ENCODE measurements at regions of chr9 and their contacts with region 1.

Region 1: GRCh38 chr9:83334320-83334719 is 203.9 kb downstream of the FRMD3 start:
- DNase-seq: peak; percentile 67 to 80
- H3K4me3 ChIP-seq: no peak overlapping the region
- H3K27ac ChIP-seq: no peak overlapping the region; the same call in 1 of the 2 replicates
- H3K4me1 ChIP-seq: peaks cover 13% of the 10 kb centered on the region; the same call in 1 of the 2 replicates
- H3K27me3 ChIP-seq: no peaks in the 10 kb centered on the region
- CTCF ChIP-seq: peak; percentile 93

Region 2: DNA sequence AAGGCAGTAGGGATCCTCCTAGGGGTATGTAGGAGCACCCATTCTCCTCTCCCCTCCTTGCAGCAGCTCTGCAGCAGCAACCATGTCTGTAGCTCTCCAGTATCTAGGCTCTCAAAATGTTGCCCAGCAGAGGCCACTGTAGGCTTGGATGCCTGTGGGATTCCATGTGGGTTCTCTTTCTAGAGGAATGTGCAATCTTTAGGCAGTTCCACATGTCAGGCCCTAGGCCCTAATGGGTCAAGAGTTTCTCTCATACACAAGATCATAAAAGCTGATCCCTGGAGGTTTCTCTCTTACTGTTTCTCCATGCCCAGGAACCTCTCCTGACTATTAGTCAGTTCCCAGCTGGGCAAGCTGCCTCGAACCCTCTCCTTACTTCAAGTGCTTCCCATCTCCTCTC is 11.9 kb before region 1 on chr9:
- CTCF ChIA-PET with region 1: no interaction called
- POLR2A ChIA-PET with region 1: no interaction called
- intact Hi-C with region 1: no loop called
- DNase-seq: no peak
- H3K4me3 ChIP-seq: no peak overlapping the region
- H3K27ac ChIP-seq: no peak overlapping the region
- H3K4me1 ChIP-seq: no peaks in the 10 kb centered on the region
- H3K27me3 ChIP-seq: no peaks in the 10 kb centered on the region
- CTCF ChIP-seq: no peak

Region 3: GRCh38 chr9:83346655-83347420 is 12.5 kb after region 1 on chr9:
- CTCF ChIA-PET with region 1: no interaction called
- POLR2A ChIA-PET with region 1: no interaction called
- intact Hi-C with region 1: no loop called
- DNase-seq: no peak
- H3K4me3 ChIP-seq: no peak overlapping the region
- H3K27ac ChIP-seq: no peak overlapping the region
- H3K4me1 ChIP-seq: no peaks in the 10 kb centered on the region
- H3K27me3 ChIP-seq: no peaks in the 10 kb centered on the region
- CTCF ChIP-seq: no peak

Region 4: DNA sequence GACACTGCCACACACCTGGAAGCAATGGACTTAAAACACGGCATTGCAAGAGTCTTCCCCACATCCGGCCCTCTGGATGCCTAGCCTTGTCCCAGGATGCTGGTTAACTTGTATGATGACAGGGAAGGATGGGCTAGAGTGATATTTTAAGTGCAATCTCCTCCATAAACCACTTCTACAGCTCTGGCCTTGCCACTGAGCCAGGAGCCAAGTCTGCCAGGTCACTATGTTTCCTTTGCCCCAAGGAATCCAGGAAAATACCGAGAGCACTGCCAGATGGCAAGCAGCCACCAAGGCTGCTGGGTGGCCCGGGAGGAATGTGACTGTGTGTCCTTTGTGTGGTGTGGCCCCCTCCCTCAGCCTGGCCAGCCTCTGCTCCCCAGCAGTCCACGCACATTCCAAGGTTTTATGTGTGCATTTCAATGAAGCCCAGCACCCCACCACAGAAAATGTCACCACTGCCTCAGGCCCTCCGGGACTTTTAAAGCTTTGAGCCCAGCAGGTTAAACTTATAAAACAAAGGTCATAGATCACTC is 97.9 kb after region 1 on chr9:
- CTCF ChIA-PET with region 1: no interaction called
- POLR2A ChIA-PET with region 1: no interaction called
- intact Hi-C with region 1: loop called (anchors 5 kb)
- DNase-seq: peak; percentile 95
- H3K4me3 ChIP-seq: no peak overlapping the region
- H3K27ac ChIP-seq: peak overlapping the region; percentile 50
- H3K4me1 ChIP-seq: peaks cover 30% of the 10 kb centered on the region
- H3K27me3 ChIP-seq: no peaks in the 10 kb centered on the region
- CTCF ChIP-seq: no peak

Region 5: DNA sequence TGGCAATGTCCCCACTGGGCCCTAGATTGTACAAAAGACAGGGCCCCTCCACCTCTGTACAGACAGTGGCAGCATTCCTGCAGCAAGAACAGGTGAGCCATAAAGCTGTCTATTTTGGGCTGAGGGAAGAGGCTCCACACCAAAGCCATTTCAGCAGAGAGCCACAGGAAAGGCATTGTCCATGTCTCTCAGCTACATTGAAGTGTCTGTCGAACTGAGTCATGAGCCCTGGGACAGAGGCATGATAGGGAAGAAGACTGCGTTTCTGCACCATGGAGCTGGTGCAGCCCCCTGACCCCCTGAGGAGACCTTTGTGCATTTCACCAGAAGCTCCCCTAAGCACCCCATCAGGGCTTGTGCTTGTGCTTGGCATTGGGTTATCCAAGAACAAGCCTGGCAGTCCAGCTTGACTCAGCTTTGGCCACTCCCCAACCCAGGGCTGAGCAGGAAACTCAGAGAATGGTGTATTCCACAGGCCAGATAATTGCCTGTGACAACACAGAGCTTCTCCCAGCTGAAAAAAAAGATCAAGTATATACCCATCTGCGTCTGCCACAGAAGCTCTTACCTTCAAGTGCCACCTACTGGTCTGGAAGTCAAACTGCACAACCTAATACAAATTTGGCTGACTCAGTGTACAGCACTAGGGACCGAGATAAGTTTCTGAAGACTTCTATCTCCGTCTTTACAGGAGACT is 209.8 kb after region 1 on chr9:
- CTCF ChIA-PET with region 1: interaction called, 20 read pairs
- POLR2A ChIA-PET with region 1: interaction called, 3 read pairs
- intact Hi-C with region 1: loop called (anchors 1 kb)
- DNase-seq: peak; percentile 37 to 71
- H3K4me3 ChIP-seq: no peak overlapping the region
- H3K27ac ChIP-seq: no peak overlapping the region
- H3K4me1 ChIP-seq: peaks cover 11% of the 10 kb centered on the region; the same call in 1 of the 2 replicates
- H3K27me3 ChIP-seq: no peaks in the 10 kb centered on the region
- CTCF ChIP-seq: peak; percentile 82

Region 6: DNA sequence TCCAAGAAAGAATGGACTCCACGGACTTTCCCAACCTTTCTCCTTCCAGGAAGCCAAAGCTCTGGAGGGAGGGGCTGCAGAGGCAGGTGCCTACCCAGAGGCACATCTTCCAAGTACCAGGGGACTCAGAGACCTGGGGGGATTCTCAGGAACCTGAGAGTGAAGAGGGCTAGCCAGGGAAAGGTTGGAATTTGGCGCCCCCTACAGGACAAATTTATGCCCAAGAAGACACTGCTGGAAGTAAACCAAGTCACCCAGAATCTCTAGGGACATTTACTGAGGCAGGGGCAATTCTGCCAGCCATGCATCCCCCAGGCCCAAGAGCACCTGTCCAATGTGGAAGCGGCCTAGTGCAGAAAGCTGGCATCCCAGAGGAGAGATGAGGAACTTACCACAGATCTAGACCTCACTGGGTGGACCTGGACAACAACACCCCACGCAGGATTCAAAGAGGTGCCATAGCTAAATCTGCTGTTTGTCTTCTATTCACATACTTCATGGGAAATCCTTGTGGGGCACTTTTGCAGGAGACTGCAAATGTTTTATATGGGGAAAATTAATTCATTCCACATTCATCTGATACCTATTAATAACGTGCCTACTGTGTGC is 262.7 kb after region 1 on chr9:
- CTCF ChIA-PET with region 1: interaction called, 4 read pairs
- POLR2A ChIA-PET with region 1: no interaction called
- intact Hi-C with region 1: loop called (anchors 1 kb)
- DNase-seq: peak in 1 of 2 experiments; percentile 32
- H3K4me3 ChIP-seq: no peak overlapping the region
- H3K27ac ChIP-seq: no peak overlapping the region
- H3K4me1 ChIP-seq: no peaks in the 10 kb centered on the region
- H3K27me3 ChIP-seq: no peaks in the 10 kb centered on the region
- CTCF ChIP-seq: peak; percentile 89